ENCODE measurements at regions of chr2 and their contacts with region 1.

Region 1: DNA sequence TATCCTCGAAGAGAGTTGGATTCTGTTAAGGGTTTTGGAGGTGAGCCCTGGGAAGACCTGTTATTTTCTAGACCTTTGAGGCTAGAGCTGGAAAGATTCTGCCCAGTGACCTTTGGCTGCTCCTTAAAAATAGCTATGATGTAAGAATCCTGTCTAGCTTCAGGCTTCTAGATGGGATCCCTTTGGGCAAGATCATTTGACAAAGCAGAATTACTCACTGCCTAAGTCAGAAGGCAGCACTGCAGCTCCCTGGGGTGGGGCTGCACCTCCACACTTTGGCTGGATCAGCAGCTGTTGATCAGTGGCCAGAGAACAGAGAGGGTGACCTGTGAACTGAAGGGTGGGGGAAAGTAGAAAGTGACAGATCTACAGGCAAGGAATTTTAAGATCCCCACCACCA is 103.8 kb downstream of the ASAP2 start:
- DNase-seq: peak; percentile 43 to 76
- ATAC-seq: peak; percentile 89 to 90
- H3K4me3 ChIP-seq: no peak overlapping the region
- H3K27ac ChIP-seq: peak overlapping the region; percentile 79 to 83 (median 82)
- H3K4me1 ChIP-seq: peaks cover 32 to 35% of the 10 kb centered on the region in 2 donors
- H3K27me3 ChIP-seq: no peaks in the 10 kb centered on the region
- CTCF ChIP-seq: no peak
- POLR2A ChIP-seq: peak in 1 of 2 donors; percentile 16

Region 2: GRCh38 chr2:8438476-8438875 is 871.9 kb before region 1 on chr2:
- in situ Hi-C with region 1: no loop called
- intact Hi-C with region 1: loop called (anchors 5 kb)
- DNase-seq: peak in 1 of 2 donors; percentile 25
- ATAC-seq: no peak
- H3K4me3 ChIP-seq: no peak overlapping the region
- H3K27ac ChIP-seq: no peak overlapping the region
- H3K4me1 ChIP-seq: peaks cover 0 to 4% of the 10 kb centered on the region in 2 donors
- H3K27me3 ChIP-seq: no peaks in the 10 kb centered on the region
- CTCF ChIP-seq: no peak
- POLR2A ChIP-seq: no peak

Region 3: GRCh38 chr2:9282128-9283112 is 28.0 kb before region 1 on chr2:
- in situ Hi-C with region 1: no loop called
- intact Hi-C with region 1: loop called (anchors 2 kb)
- DNase-seq: no peak
- ATAC-seq: peak; percentile 60 to 81
- H3K4me3 ChIP-seq: no peak overlapping the region
- H3K27ac ChIP-seq: peak overlapping the region in 1 of 4 donors; percentile 29
- H3K4me1 ChIP-seq: peaks cover 25 to 36% of the 10 kb centered on the region in 2 donors
- H3K27me3 ChIP-seq: no peaks in the 10 kb centered on the region
- CTCF ChIP-seq: no peak
- POLR2A ChIP-seq: no peak

Region 4: GRCh38 chr2:10285556-10286198 is 975.3 kb after region 1 on chr2:
- in situ Hi-C with region 1: no loop called
- intact Hi-C with region 1: no loop called
- DNase-seq: peak; percentile 29 to 72
- ATAC-seq: peak; percentile 68 to 82
- H3K4me3 ChIP-seq: no peak overlapping the region
- H3K27ac ChIP-seq: peak overlapping the region in 3 of 4 donors; percentile 6 to 43 (median 38)
- H3K4me1 ChIP-seq: peaks cover 7 to 10% of the 10 kb centered on the region in 2 donors
- H3K27me3 ChIP-seq: no peaks in the 10 kb centered on the region
- CTCF ChIP-seq: no peak
- POLR2A ChIP-seq: no peak

Measured in gastrocnemius medialis (tissue), 4 donors.